ENCODE measurements at regions of chr5 and their contacts with region 1.

Region 1: DNA sequence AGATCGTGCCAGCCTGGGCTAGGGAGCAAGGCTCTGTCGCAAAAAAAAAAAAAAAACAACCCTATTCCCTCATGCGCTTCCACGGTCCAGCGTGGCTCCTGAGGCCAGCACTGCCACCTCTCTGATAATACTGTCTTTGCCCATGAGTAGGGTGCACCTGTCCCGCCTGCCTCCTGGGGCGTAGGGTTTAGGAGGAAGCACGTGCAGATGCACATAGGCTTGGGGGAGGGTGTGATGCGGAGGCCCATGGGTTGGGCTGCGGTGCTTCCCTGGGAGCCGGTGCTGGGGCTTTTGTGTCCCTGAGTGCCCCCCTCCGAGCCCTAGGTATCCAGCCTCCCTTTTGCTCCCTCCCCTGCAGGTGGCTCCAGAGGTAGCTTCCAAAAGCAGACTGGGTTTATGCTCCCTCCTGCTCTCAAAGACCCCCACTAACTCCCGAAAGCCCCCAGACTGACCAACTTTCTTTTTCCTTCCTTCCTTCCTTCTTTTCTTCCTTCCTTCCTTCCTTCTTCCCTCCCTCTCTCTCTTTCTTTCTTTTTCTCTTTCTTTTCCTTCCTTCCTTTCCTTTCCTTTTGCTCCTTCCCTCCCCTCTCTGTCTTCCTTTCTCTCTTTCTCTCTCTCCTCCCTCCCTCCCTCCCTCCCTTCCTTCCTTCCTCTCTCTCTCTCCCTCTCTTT is 12.8 kb downstream of the FGFR4 start:
- DNase-seq: no peak
- H3K4me3 ChIP-seq: no peak overlapping the region
- H3K27ac ChIP-seq: no peak overlapping the region
- H3K4me1 ChIP-seq: no peaks in the 10 kb centered on the region
- H3K27me3 ChIP-seq: no peaks in the 10 kb centered on the region
- CTCF ChIP-seq: no peak

Region 2: DNA sequence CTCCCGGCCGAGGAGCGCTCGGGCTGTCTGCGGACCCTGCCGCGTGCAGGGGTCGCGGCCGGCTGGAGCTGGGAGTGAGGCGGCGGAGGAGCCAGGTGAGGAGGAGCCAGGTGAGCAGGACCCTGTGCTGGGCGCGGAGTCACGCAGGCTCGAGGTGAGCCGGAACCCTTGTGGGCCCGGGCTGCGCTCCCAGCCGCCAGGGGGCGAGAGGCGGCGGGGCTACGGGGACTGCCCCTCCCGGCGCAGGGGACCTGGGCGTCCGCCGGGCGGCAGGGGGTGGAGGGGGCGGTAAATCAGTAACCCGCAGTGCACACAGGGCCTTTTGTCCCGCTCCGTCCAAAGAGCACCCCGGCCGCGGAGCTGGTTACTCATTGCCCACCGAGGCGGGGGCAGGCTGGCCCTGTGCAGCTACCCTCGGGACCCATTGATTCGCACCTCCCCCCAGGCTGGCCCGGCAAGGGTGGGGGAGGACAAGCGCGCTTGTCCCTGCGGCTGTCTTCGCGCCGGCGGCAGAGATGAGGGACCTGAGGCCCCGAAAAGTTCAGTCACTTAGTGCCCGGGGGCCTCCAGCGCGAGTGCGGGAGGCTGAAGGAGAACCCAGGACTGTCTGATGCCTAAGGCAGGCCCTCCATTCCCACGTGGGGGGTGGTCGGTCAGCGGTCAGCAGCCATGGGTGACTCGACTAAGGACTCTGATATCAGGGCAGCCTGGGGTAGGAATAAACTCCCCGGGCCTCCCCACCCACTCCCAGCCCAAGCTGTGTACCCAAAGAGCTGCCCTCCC is 12.4 kb before region 1 on chr5:
- CTCF ChIA-PET with region 1: interaction called, 10 read pairs
- dilution Hi-C with region 1: no loop called
- in situ Hi-C with region 1: no loop called
- intact Hi-C with region 1: no loop called
- DNase-seq: peak; percentile 14
- H3K4me3 ChIP-seq: peak overlapping the region in 2 of 3 experiments; percentile 42 to 45
- H3K27ac ChIP-seq: no peak overlapping the region
- H3K4me1 ChIP-seq: peaks cover 8% of the 10 kb centered on the region
- H3K27me3 ChIP-seq: peaks cover 2% of the 10 kb centered on the region
- CTCF ChIP-seq: peak; percentile 15 to 55